Breast epithelium (tissue), 4 donors: ENCODE measurements at regions of chr6 and their contacts with region 1.

Region 1: GRCh38 chr6:79841577-79842375 is 105.6 kb downstream of the ELOVL4 start:
- DNase-seq: no peak
- H3K4me3 ChIP-seq: no peak overlapping the region
- H3K27ac ChIP-seq: no peak overlapping the region
- H3K4me1 ChIP-seq: no peaks in the 10 kb centered on the region
- H3K27me3 ChIP-seq: no peaks in the 10 kb centered on the region
- CTCF ChIP-seq: no peak
- POLR2A ChIP-seq: no peak

Region 2: DNA sequence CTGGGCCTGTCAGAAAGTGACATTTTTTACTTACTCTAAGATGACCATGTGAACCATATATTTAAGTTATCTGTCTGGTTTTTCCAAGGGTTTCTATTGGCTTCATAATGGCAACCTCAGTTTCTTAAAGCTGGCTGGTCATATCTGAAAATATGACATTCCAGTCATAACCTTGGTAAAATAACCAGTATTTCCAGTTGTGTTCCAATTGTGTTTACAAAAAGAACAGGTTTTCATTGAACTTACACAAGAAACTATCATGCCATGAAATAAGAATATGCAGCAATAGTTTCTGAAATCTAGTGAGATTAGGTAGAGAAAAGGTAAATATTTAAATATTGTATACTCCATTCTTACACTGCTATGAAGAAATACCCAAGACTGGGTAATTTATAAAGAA is 545.6 kb before region 1 on chr6:
- intact Hi-C with region 1: loop called (anchors 10 kb)
- DNase-seq: no peak
- H3K4me3 ChIP-seq: no peak overlapping the region
- H3K27ac ChIP-seq: no peak overlapping the region
- H3K4me1 ChIP-seq: no peaks in the 10 kb centered on the region
- H3K27me3 ChIP-seq: no peaks in the 10 kb centered on the region
- CTCF ChIP-seq: no peak
- POLR2A ChIP-seq: no peak